ENCODE measurements at regions of chr16 and their contacts with region 1.

Region 1: DNA sequence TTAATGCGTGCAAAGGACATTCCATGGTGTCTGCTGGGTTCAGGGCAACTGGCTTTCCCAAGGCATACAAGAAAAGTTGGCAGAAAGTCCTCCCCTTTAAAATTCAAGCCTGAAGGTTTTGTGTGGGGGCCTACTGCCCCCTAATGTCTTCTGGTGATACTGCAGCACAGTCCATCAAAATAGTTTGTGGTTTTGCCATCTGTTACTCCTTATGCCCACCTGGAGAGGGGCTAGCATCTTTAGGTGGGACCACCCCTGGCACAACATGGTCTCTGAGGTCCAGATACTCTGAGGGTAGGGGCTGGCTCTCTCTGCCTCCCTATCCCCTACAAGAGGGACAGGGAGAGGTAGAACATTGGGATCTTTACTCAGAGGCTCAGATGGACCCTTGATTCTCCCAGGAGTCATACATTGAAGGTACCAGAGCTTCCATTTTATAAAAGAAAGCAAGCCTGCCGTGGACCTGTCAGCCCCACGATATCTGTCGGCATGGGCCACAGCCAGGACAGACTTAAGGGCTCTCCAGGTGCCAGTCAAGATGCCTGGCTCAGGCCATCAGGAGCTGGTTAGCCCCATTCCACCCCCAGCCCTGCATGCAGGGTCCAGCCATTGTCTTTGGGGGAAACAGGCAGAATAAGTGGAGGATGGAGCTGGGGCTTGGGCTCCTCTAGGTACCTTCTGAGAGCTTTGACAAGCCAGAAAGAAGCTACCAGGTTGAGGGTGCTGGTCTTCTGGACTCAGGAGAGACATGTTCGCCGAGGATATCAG is 6.3 kb downstream of the ESRP2 start:
- DNase-seq: peak in 4 of 7 donors; percentile 36 to 75 (median 65)
- H3K4me3 ChIP-seq: no peak overlapping the region
- H3K27ac ChIP-seq: no peak overlapping the region
- H3K4me1 ChIP-seq: peaks cover 7 to 9% of the 10 kb centered on the region in 2 donors
- H3K27me3 ChIP-seq: no peaks in the 10 kb centered on the region
- CTCF ChIP-seq: peak; percentile 81 to 89 (median 84)
- POLR2A ChIP-seq: no peak

Region 2: GRCh38 chr16:67979955-67980678 is 249.5 kb before region 1 on chr16 and contains the start of gene DPEP3:
- intact Hi-C with region 1: loop called in 1 of 2 experiments (anchors 10 kb)
- DNase-seq: no peak
- H3K4me3 ChIP-seq: no peak within 1 kb of the TSS
- H3K27ac ChIP-seq: no peak within 1 kb of the TSS
- H3K4me1 ChIP-seq: peaks cover 0 to 15% of the 10 kb centered on the region in 2 donors
- H3K27me3 ChIP-seq: no peaks in the 10 kb centered on the region
- CTCF ChIP-seq: no peak
- POLR2A ChIP-seq: no peak
- total RNA-seq, gene DPEP3: 0.11 TPM in 1 of 9 donors, not detected in the others

Region 3: GRCh38 chr16:67993189-67994039 is 236.2 kb before region 1 on chr16:
- intact Hi-C with region 1: loop called (anchors 5 to 10 kb)
- DNase-seq: peak; percentile 68 to 82 (median 75)
- H3K4me3 ChIP-seq: peak overlapping the region in 2 of 4 donors; percentile 22 to 30
- H3K27ac ChIP-seq: peak overlapping the region in 3 of 5 donors; percentile 56 to 64 (median 63)
- H3K4me1 ChIP-seq: peaks cover 3 to 10% of the 10 kb centered on the region in 2 donors
- H3K27me3 ChIP-seq: no peaks in the 10 kb centered on the region
- CTCF ChIP-seq: peak; percentile 86 to 99 (median 97)
- POLR2A ChIP-seq: no peak

Measured in adrenal gland (tissue), 19 donors.